H1 (cell line): ENCODE measurements at regions of chr2 and their contacts with region 1.

Region 1: DNA sequence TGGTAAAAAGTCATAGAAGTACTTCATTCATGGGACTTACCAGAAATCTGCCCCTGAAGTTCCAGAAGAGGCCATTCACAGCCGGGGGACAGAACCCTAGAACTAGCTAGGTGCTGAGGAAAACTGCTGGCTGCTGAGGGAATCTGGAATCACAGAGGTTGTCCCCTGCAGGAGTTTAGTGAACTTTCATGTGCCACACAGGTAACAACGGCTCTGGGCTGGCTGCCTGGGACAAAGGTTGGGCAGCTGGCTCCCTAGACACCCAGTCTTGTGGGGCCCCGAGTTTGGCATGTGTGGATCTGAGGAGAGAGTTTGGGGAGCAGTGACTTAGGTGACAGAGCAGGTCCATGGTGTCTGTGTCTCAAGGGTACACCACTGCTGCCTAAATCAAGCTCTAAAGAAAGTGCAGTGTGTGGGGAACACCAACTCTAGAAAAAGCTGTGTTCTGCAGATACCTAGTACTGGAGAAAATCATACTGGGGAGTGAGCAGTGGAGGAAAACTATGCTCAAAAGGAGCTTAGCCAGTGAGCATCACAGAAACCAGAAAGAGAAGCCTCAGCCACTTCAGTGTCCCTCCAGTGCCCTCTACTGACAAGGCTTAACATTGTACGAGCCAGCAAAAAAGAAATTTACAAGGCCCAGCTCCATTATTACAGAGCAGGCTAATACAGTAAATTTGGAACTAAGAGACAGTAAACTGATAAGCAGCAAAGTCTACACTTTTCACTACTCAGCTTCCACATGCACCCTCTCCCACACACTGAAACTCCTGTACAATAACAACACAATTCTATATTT is 15.2 kb downstream of the GALNT3 start:
- DNase-seq: no peak
- H3K4me3 ChIP-seq: no peak overlapping the region
- H3K27ac ChIP-seq: no peak overlapping the region
- H3K4me1 ChIP-seq: peaks cover 0 to 6% (median 5%) of the 10 kb centered on the region in 4 experiments; a peak in 5 of 7 replicates
- H3K27me3 ChIP-seq: no peaks in the 10 kb centered on the region
- CTCF ChIP-seq: peak; percentile 18 to 72 (median 68)
- EP300 ChIP-seq: no peak
- POLR2A ChIP-seq: no peak
- RAD21 ChIP-seq: peak; percentile 84 to 87

Region 2: GRCh38 chr2:165401285-165401852 is 377.5 kb before region 1 on chr2:
- CTCF ChIA-PET with region 1: interaction called, 12 read pairs
- POLR2A ChIA-PET with region 1: no interaction called
- DNase-seq: no peak
- H3K4me3 ChIP-seq: no peak overlapping the region
- H3K27ac ChIP-seq: no peak overlapping the region
- H3K4me1 ChIP-seq: peaks cover 0 to 5% (median 4%) of the 10 kb centered on the region in 4 experiments; a peak in 5 of 7 replicates
- H3K27me3 ChIP-seq: no peaks in the 10 kb centered on the region
- CTCF ChIP-seq: peak in 2 of 3 experiments; percentile 60 to 71; a peak in 2 of 4 replicates
- EP300 ChIP-seq: no peak
- POLR2A ChIP-seq: no peak
- RAD21 ChIP-seq: peak; percentile 84 to 88

Region 3: DNA sequence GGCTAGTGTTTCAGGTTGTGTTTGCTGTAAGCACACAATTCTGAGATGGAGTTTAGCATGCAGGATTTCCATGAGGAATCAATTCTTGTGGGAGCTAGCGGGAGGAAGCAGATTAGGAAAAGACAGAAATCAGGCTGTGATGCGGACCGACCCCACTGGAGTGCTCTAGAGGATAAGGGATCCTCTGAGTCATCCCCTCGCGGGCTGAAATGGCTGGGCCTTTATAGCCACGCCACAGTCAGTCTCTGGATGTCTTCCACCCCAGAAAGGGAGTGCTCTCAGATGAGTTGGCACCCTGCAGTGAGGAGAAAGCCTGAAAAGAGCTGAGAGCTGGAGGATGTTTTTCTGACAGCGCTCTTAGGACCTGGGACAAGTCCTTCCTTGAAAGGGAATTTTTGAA is 87.2 kb before region 1 on chr2:
- CTCF ChIA-PET with region 1: interaction called, 13 read pairs
- POLR2A ChIA-PET with region 1: no interaction called
- DNase-seq: peak in 1 of 2 experiments; percentile 59
- H3K4me3 ChIP-seq: no peak overlapping the region
- H3K27ac ChIP-seq: no peak overlapping the region
- H3K4me1 ChIP-seq: no peaks in the 10 kb centered on the region
- H3K27me3 ChIP-seq: no peaks in the 10 kb centered on the region
- CTCF ChIP-seq: peak; percentile 41 to 58 (median 47)
- EP300 ChIP-seq: no peak
- POLR2A ChIP-seq: no peak
- RAD21 ChIP-seq: peak; percentile 81 to 84

Region 4: DNA sequence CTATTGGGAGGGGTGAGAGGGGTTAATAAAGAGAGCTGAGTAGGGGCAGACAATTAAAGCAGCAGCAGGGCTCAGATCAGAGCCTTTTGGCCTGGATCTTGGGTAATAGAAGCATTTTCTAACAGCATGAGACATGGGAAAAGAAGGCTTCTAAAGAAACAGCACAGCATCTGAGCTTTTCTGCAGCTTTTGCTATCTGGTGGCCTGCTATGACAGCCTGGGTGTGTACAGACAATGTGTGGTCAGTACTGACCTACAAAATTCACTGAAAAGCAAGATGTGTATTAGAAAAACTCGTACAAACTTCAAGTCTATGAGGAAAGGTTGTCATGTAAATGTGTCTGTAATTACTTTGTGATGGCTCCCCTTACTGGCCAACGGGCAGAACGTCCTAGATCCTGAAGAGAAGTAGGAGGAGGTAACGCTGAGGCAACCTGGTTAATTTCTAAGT is 80.4 kb before region 1 on chr2:
- CTCF ChIA-PET with region 1: interaction called, 10 read pairs
- POLR2A ChIA-PET with region 1: interaction called, 3 read pairs
- DNase-seq: peak in 1 of 2 experiments; percentile 69
- H3K4me3 ChIP-seq: no peak overlapping the region; a peak in 1 of 8 replicates
- H3K27ac ChIP-seq: no peak overlapping the region
- H3K4me1 ChIP-seq: peaks cover 0 to 14% (median 5%) of the 10 kb centered on the region in 4 experiments; a peak in 5 of 7 replicates
- H3K27me3 ChIP-seq: no peaks in the 10 kb centered on the region
- CTCF ChIP-seq: peak; percentile 26 to 67 (median 45)
- EP300 ChIP-seq: no peak
- POLR2A ChIP-seq: no peak
- RAD21 ChIP-seq: peak; percentile 65 to 73

Region 5: DNA sequence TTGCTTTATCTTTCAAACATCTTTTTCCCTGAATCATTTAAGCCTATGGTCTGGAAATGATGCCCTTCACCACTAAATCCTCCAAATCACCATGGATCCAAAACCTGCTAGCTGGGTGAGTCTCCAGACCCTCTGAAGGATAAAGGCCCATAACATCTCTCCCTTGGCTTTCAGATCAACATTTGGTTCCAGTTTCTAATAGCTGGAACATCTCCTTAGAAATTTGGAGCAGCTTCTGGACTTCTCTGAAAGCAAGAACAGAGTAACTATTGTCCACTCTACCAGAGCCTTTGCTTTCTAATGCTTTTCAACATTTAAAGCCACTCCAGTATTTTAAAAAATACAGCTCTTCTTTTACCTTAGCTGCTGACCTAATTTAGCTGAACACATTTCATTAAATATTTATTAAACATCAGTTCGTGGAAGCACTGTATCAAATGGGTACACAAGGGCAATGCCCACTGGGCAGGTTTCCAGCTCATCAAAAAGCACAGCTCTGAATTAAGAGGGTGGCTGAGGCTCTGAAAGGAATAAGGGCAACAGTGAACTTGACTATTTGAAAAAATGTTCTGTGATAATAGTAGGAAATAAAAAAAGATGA is 60.1 kb before region 1 on chr2:
- CTCF ChIA-PET with region 1: no interaction called
- POLR2A ChIA-PET with region 1: no interaction called
- DNase-seq: no peak
- H3K4me3 ChIP-seq: no peak overlapping the region
- H3K27ac ChIP-seq: no peak overlapping the region
- H3K4me1 ChIP-seq: no peaks in the 10 kb centered on the region
- H3K27me3 ChIP-seq: no peaks in the 10 kb centered on the region
- CTCF ChIP-seq: no peak
- EP300 ChIP-seq: no peak
- POLR2A ChIP-seq: no peak
- RAD21 ChIP-seq: no peak

Region 6: GRCh38 chr2:165794536-165794928 is 15.7 kb after region 1 on chr2:
- CTCF ChIA-PET with region 1: interaction called, 13 read pairs
- POLR2A ChIA-PET with region 1: interaction called, 12 read pairs
- DNase-seq: no peak
- H3K4me3 ChIP-seq: peak overlapping the region; percentile 65 to 83 (median 79)
- H3K27ac ChIP-seq: peak overlapping the region; percentile 59; the same call in 1 of the 2 replicates
- H3K4me1 ChIP-seq: peaks cover 0 to 26% (median 1%) of the 10 kb centered on the region in 4 experiments; a peak in 3 of 7 replicates
- H3K27me3 ChIP-seq: no peaks in the 10 kb centered on the region; a peak in 1 of 7 replicates
- CTCF ChIP-seq: no peak
- EP300 ChIP-seq: no peak
- POLR2A ChIP-seq: no peak; a peak in 1 of 3 replicates
- RAD21 ChIP-seq: no peak

Region 7: GRCh38 chr2:165847001-165847400 is 68.1 kb after region 1 on chr2:
- CTCF ChIA-PET with region 1: interaction called, 14 read pairs
- POLR2A ChIA-PET with region 1: no interaction called
- DNase-seq: no peak
- H3K4me3 ChIP-seq: no peak overlapping the region
- H3K27ac ChIP-seq: no peak overlapping the region
- H3K4me1 ChIP-seq: peaks cover 0 to 9% (median 5%) of the 10 kb centered on the region in 4 experiments; a peak in 4 of 7 replicates
- H3K27me3 ChIP-seq: peaks cover 0 to 1% (median 0%) of the 10 kb centered on the region in 4 experiments; a peak in 1 of 7 replicates
- CTCF ChIP-seq: peak in 2 of 3 experiments; percentile 13 to 57; a peak in 2 of 4 replicates
- EP300 ChIP-seq: no peak
- POLR2A ChIP-seq: no peak
- RAD21 ChIP-seq: peak; percentile 42 to 52; a peak in 3 of 4 replicates